ENCODE measurements at regions of chr1 and their contacts with region 1.

Region 1: GRCh38 chr1:64864018-64864940 is 102.1 kb downstream of the JAK1 start:
- DNase-seq: no peak
- H3K4me3 ChIP-seq: no peak overlapping the region
- H3K27ac ChIP-seq: no peak overlapping the region
- H3K4me1 ChIP-seq: no peaks in the 10 kb centered on the region
- H3K27me3 ChIP-seq: no peaks in the 10 kb centered on the region
- CTCF ChIP-seq: no peak

Region 2: DNA sequence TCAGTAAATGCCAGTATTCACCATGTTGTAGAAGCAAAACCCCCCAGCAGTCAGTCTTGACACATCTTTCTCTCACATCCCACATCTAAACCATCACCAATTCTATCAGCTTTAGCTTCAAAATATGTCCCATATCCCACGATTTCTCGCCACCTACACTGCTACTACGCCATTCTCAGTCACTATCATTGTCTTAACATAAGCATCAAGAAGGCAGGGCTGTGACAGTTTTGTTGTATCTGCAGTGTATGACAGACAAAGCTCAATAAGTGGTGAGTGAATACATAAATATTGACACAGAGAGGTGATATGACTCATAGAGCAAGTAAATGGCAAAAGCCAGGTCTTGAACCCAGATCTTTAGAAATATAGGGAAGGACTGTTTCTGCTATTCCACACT is 42.2 kb after region 1 on chr1:
- CTCF ChIA-PET with region 1: no interaction called
- dilution Hi-C with region 1: no loop called
- in situ Hi-C with region 1: no loop called
- intact Hi-C with region 1: no loop called
- DNase-seq: no peak
- H3K4me3 ChIP-seq: no peak overlapping the region
- H3K27ac ChIP-seq: no peak overlapping the region
- H3K4me1 ChIP-seq: peaks cover 12% of the 10 kb centered on the region
- H3K27me3 ChIP-seq: no peaks in the 10 kb centered on the region
- CTCF ChIP-seq: no peak

Region 3: GRCh38 chr1:64923294-64923721 is 59.0 kb after region 1 on chr1:
- CTCF ChIA-PET with region 1: no interaction called
- dilution Hi-C with region 1: no loop called
- in situ Hi-C with region 1: loop called in 1 of 2 experiments (anchors 10 kb)
- intact Hi-C with region 1: no loop called
- DNase-seq: no peak
- H3K4me3 ChIP-seq: no peak overlapping the region
- H3K27ac ChIP-seq: no peak overlapping the region
- H3K4me1 ChIP-seq: peaks cover 15% of the 10 kb centered on the region
- H3K27me3 ChIP-seq: no peaks in the 10 kb centered on the region
- CTCF ChIP-seq: no peak

Region 4: DNA sequence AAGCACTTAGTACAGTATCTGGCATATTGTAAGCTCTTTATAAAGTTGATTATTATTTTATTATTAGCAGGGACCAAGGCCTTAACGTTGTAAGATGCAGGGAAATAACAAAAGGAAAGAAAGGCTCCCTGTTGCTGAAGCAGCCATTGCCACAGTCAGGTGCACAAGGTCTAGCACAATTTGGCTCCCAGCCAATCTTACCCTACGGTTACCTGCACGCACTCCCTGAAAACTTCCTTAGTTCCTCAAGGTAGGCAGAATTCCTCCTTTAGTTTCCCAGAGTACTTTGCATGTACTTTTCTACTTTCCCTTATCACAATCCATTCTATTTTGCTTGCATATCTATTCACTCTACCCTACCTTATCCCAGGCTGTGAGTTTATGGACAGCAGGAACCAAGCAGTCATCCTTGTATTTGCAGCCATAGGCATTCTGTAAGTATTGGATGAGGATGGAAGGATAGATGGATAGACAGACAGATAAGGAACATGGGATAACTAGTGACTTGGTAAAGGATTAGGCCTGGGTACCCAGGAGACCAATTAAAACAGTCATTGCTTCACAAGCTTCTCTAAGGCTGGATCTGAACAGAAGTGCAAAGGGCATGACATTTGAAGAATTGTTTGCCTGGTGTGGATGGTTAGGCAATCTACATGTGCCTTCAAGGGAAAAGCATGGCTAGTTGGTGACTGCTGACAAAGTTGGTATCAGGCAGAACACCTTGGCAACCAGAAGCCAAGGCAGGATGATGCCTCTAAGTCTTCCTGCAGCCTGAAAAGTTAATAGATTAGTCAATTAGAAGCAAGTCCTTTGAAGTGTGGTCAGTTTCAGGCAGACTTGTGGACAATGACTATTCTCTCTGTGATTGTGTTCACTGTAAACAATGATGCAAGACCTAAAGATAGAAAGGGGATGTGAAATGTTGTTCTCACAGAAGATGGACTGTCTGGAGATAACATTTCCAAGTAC is 122.9 kb after region 1 on chr1:
- CTCF ChIA-PET with region 1: no interaction called
- dilution Hi-C with region 1: no loop called
- in situ Hi-C with region 1: no loop called
- intact Hi-C with region 1: no loop called
- DNase-seq: peak; percentile 23
- H3K4me3 ChIP-seq: no peak overlapping the region
- H3K27ac ChIP-seq: no peak overlapping the region
- H3K4me1 ChIP-seq: peaks cover 15% of the 10 kb centered on the region
- H3K27me3 ChIP-seq: no peaks in the 10 kb centered on the region
- CTCF ChIP-seq: no peak